ENCODE measurements at regions of chr14 and their contacts with region 1.

Region 1: DNA sequence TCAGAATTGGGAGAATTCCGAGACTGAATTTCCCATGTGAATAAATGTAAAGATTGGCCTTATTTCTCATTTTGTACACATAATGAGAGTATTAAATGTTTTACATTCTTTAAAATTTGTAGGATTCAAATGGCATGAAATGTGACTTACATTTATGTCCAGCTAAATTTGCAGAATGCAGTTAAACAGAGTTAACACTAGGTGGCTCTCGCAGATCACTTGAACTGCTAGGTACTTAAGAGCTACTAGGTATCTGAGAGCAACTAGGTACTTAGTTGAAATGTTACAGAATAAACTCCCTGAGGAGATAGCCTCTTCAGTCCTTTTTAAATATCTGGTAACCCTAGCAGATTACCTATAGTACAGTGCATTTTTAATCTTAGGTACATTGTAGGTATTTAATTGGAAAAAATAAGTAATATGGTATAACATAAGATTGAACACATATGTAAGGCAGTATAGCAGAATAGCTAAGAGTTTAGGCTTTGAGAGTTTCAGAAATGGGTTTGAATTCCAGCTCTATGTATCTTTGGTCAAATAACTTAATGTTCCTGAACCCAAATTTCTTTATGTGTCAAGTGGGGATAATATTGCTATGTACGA is 73.8 kb downstream of the KIAA0586 start:
- DNase-seq: no peak
- H3K4me3 Mint-ChIP-seq: no peak overlapping the region
- H3K27ac Mint-ChIP-seq: no peak overlapping the region
- H3K4me1 Mint-ChIP-seq: no peaks in the 10 kb centered on the region
- H3K27me3 Mint-ChIP-seq: no peaks in the 10 kb centered on the region

Region 2: DNA sequence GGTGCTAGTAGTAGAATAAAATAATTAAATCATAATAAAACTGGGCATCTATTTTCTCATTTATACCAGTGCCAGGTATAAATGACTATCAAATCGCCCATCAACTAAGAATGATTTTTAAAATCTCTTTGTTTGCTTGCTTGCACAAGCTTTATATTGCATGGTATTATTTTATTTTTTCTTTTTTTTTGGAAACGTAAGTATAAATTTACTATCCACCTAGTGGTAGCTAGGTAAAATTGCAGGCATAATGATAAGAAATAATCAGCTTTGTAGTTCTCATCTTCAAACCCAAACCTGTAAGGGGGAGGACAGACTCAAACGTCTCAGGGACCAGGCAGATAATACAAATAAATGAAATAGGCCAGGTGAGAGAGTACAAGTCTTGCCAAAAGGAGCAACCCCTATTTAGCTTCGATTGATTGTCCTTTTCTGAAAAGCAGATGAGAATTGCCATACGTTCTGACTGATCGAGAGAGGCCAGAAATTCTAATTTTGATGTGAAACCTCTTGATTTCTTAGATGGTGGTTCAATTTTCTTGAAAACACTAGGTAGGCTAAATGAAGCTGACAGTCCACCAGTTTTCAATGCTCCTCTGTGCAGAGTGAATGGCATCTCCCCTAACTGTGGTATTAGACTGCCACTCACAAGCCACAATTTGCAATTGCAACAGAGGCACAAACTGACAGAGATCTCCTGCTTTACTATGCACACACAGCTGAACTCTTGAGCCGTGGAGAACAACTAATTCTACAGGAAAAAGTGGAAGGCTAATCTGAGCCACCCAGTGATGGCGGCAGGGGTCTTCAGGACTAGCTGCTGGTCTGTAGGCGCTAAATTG is 325.8 kb after region 1 on chr14:
- intact Hi-C with region 1: loop called (anchors 10 kb)
- DNase-seq: no peak
- H3K4me3 Mint-ChIP-seq: no peak overlapping the region
- H3K27ac Mint-ChIP-seq: no peak overlapping the region
- H3K4me1 Mint-ChIP-seq: peaks cover 5% of the 10 kb centered on the region
- H3K27me3 Mint-ChIP-seq: no peaks in the 10 kb centered on the region

Region 3: GRCh38 chr14:59055439-59056045 is 554.2 kb after region 1 on chr14:
- intact Hi-C with region 1: loop called (anchors 1 kb)
- DNase-seq: no peak
- H3K4me3 Mint-ChIP-seq: no peak overlapping the region
- H3K27ac Mint-ChIP-seq: no peak overlapping the region
- H3K4me1 Mint-ChIP-seq: no peaks in the 10 kb centered on the region
- H3K27me3 Mint-ChIP-seq: peaks cover 2% of the 10 kb centered on the region